Ascending aorta (tissue), 2 donors: ENCODE measurements at regions of chr17 and their contacts with region 1.

Region 1: DNA sequence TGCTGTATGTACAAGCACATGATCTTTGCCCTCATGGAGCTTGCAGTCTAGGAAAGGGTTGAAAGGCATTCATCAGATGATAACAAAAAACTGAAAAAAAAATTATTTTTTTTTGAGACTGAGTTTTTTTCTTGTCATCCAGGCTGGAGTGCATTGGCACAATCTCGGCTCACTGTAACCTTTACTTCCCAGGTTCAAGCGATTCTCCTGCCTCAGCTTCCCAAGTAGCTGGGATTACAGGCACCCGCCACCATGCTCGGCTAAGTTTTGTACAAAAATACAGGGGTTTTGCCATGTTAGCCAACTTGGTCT is 38.7 kb upstream of the BCAS3 start:
- DNase-seq: no peak
- H3K4me3 ChIP-seq: no peak overlapping the region
- H3K27ac ChIP-seq: no peak overlapping the region
- H3K4me1 ChIP-seq: no peaks in the 10 kb centered on the region
- H3K27me3 ChIP-seq: no peaks in the 10 kb centered on the region
- CTCF ChIP-seq: peak in 1 of 3 experiments; percentile 1

Region 2: DNA sequence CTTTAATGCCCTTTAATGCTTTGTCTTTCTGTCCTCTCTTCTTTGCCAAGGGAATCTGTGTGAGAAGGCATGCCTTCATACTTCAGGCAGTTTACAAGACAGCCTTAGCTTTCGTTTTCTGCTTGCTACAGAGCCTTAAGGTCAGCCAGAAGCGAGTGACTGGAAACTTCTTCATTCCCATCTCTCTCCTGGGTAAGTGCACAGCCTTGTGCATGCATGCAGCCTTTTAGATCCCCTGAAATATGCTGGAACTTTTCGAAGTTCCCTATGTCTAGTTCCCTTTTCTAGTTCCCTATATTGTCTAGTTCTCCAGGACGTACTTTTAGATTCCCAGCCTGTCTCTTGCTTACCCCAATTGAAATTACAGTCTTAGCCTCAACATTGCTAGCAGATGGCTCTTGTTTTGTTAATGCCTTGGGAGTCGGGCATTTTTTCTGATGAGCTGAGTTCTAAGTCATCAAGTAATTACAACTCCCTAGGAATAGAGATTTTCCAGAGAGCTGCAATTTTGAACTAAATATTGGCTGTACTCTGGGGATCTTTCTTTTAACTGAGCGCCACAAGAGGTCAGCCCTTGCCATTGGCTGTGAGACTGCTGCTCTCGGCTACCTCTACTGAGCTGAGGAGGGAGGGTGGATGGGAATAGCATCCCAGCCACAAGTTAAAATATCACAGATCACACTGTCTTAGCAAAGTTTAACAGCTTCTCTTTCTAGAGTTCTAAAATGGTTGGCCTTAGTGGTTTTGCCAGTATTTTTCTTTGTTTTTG is 61.6 kb before region 1 on chr17:
- intact Hi-C with region 1: loop called (anchors 1 kb)
- DNase-seq: peak in 1 of 2 donors; percentile 71
- H3K4me3 ChIP-seq: peak overlapping the region; percentile 34 to 60
- H3K27ac ChIP-seq: peak overlapping the region; percentile 47 to 52
- H3K4me1 ChIP-seq: peaks cover 0 to 7% of the 10 kb centered on the region in 2 donors
- H3K27me3 ChIP-seq: no peaks in the 10 kb centered on the region
- CTCF ChIP-seq: peak in 2 of 3 experiments; percentile 37 to 56

Region 3: GRCh38 chr17:60594734-60595133 is 44.2 kb before region 1 on chr17:
- intact Hi-C with region 1: no loop called
- DNase-seq: no peak
- H3K4me3 ChIP-seq: no peak overlapping the region
- H3K27ac ChIP-seq: no peak overlapping the region
- H3K4me1 ChIP-seq: peaks cover 0 to 5% of the 10 kb centered on the region in 2 donors
- H3K27me3 ChIP-seq: no peaks in the 10 kb centered on the region
- CTCF ChIP-seq: no peak

Region 4: GRCh38 chr17:60792250-60792898 is 153.4 kb after region 1 on chr17:
- intact Hi-C with region 1: no loop called
- DNase-seq: peak; percentile 12 to 75
- H3K4me3 ChIP-seq: no peak overlapping the region
- H3K27ac ChIP-seq: peak overlapping the region; percentile 69 to 70
- H3K4me1 ChIP-seq: no peaks in the 10 kb centered on the region
- H3K27me3 ChIP-seq: no peaks in the 10 kb centered on the region
- CTCF ChIP-seq: no peak